ENCODE measurements at regions of chr18 and their contacts with region 1.

Region 1: DNA sequence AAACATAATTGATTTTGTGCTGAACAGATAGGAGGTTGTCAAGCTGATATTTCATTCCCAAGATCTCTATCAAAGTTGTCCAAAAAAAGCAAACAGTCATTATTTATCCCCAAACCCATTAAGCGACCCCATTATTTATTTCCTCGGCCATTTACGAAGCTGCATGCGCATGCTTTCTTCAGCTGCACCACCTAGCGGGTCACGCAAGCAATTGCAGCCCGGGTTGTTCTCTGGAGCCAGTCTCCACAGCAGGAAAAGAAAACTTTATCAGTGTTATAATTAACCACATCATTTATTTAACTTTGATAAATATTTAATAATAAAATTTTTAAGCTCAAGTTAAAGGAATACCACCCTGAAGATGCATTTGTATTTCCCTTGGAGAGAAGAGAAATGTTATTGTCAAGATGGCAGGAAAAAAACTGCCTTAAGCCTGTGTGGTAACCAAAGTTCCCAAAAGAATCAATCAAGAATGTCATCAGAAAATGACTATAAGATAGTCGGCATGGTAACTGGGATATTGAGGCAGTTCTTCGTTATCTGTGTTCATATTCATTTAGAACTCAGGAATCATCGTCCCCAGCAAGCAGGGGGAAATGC is 304.7 kb downstream of the FBXO15 start:
- DNase-seq: peak in 3 of 5 donors; percentile 21 to 43 (median 41)
- ATAC-seq: peak in 2 of 4 donors; percentile 45 to 66
- H3K4me3 ChIP-seq: peak overlapping the region in 4 of 12 donors; percentile 5 to 25 (median 14)
- H3K27ac ChIP-seq: no peak overlapping the region
- H3K4me1 ChIP-seq: peaks cover 0 to 4% (median 0%) of the 10 kb centered on the region in 12 donors
- H3K27me3 ChIP-seq: peaks cover 0 to 9% (median 0%) of the 10 kb centered on the region in 9 donors
- CTCF ChIP-seq: peak; percentile 82 to 98 (median 94)
- POLR2A ChIP-seq: no peak

Region 2: GRCh38 chr18:72768681-72769229 is 1074.1 kb before region 1 on chr18:
- intact Hi-C with region 1: loop called (anchors 2 to 10 kb)
- DNase-seq: no peak
- ATAC-seq: no peak
- H3K4me3 ChIP-seq: no peak overlapping the region
- H3K27ac ChIP-seq: no peak overlapping the region
- H3K4me1 ChIP-seq: no peaks in the 10 kb centered on the region
- H3K27me3 ChIP-seq: no peaks in the 10 kb centered on the region
- CTCF ChIP-seq: peak in 3 of 12 donors; percentile 6 to 22 (median 7)
- POLR2A ChIP-seq: no peak

Region 3: DNA sequence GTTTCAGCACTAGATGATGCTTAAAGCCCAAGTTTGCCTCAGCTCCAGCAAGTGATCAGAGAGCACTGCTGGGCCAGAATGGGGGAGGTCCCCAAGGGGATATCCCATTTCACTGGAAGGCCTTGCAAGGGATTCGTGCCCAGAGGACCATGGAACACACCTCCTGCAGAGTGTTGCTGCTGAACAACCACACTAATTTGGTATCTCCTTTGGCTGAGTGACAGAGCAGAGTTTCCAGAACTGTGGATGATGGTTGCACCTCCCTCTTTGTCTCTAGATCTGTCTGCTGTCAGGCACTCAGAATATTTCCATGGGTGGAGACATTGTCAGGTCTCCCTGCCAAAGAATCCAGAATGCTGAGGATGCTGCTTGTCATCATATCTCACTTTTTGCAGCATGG is 490.3 kb before region 1 on chr18:
- intact Hi-C with region 1: loop called in 1 of 10 experiments (anchors 10 kb)
- DNase-seq: peak in 3 of 5 donors; percentile 16 to 34 (median 32)
- ATAC-seq: peak in 3 of 4 donors; percentile 76 to 81 (median 80)
- H3K4me3 ChIP-seq: no peak overlapping the region
- H3K27ac ChIP-seq: no peak overlapping the region
- H3K4me1 ChIP-seq: no peaks in the 10 kb centered on the region
- H3K27me3 ChIP-seq: no peaks in the 10 kb centered on the region
- CTCF ChIP-seq: peak in 2 of 12 donors; percentile 12 to 18
- POLR2A ChIP-seq: no peak

Region 4: GRCh38 chr18:73462092-73462491 is 380.8 kb before region 1 on chr18:
- intact Hi-C with region 1: loop called in 1 of 10 experiments (anchors 10 kb)
- DNase-seq: peak in 1 of 5 donors; percentile 12
- ATAC-seq: peak; percentile 54 to 72 (median 62)
- H3K4me3 ChIP-seq: no peak overlapping the region
- H3K27ac ChIP-seq: peak overlapping the region in 6 of 12 donors; percentile 7 to 67 (median 22)
- H3K4me1 ChIP-seq: peaks cover 0 to 10% (median 0%) of the 10 kb centered on the region in 12 donors
- H3K27me3 ChIP-seq: no peaks in the 10 kb centered on the region
- CTCF ChIP-seq: no peak
- POLR2A ChIP-seq: no peak